ENCODE measurements at regions of chr5 and their contacts with region 1.

Region 1: DNA sequence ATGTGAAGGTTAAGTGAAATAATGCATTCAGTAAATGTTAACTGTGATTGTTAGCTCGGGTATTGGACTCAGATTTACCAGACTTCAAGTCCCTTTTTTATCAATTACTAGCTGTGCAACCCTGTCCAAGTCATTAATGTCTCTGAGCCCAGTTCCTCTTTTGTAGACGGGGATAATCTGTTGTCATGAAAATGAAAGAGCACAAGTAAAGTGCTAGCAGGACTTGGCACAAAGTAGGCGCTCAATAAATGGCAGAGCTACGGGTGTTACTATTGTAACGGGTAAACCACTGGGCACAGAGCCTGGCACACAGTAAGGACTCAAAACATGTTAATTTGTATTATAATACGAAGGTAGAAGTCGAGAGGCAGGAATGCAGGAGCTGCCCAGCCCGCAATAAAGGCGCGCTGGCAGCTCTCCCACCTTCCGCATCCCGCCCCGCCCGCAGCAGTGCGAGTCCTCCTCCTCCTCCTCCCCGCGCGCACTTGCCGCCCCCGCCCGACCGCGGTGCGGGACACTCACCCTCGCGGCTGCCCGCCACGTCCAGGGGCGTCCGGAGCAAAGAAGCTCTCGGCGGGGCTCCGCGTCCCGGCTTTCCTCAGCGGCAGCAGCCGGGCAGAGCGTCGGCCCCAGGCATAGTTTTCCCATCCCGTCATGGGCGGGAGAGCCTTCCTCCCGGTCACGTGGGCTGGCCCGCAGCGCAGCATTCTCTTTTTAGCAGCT is at the start of gene C1QTNF2:
- DNase-seq: peak; percentile 64
- ATAC-seq: peak; percentile 86
- H3K4me3 Mint-ChIP-seq: peak within 1 kb of the TSS; percentile 68
- H3K27ac Mint-ChIP-seq: no peak within 1 kb of the TSS
- H3K4me1 Mint-ChIP-seq: peaks cover 11% of the 10 kb centered on the region
- H3K27me3 Mint-ChIP-seq: peaks cover 54% of the 10 kb centered on the region
- CTCF ChIP-seq: no peak
- total RNA-seq, gene C1QTNF2: 0.25 to 0.52 TPM (median 0.44 TPM) in 3 replicates

Region 2: GRCh38 chr5:160359816-160360215 is 10.3 kb before region 1 on chr5:
- CTCF ChIA-PET with region 1: interaction called, 13 read pairs
- POLR2A ChIA-PET with region 1: no interaction called
- DNase-seq: no peak
- ATAC-seq: peak; percentile 63
- H3K4me3 Mint-ChIP-seq: no peak overlapping the region
- H3K27ac Mint-ChIP-seq: no peak overlapping the region
- H3K4me1 Mint-ChIP-seq: peaks cover 18% of the 10 kb centered on the region
- H3K27me3 Mint-ChIP-seq: no peaks in the 10 kb centered on the region; the same call in 1 of the 2 replicates
- CTCF ChIP-seq: no peak

Region 3: GRCh38 chr5:160458806-160459800 is 89.0 kb after region 1 on chr5:
- CTCF ChIA-PET with region 1: no interaction called
- POLR2A ChIA-PET with region 1: no interaction called
- DNase-seq: no peak
- ATAC-seq: no peak
- H3K4me3 Mint-ChIP-seq: no peak overlapping the region
- H3K27ac Mint-ChIP-seq: no peak overlapping the region
- H3K4me1 Mint-ChIP-seq: peaks cover 7% of the 10 kb centered on the region; the same call in 1 of the 2 replicates
- H3K27me3 Mint-ChIP-seq: no peaks in the 10 kb centered on the region
- CTCF ChIP-seq: no peak

Region 4: GRCh38 chr5:160565376-160565775 is 195.2 kb after region 1 on chr5:
- CTCF ChIA-PET with region 1: no interaction called
- POLR2A ChIA-PET with region 1: no interaction called
- DNase-seq: no peak
- ATAC-seq: 0 out of 2 replicates have a peak, but pooled peaks have one; percentile 22
- H3K4me3 Mint-ChIP-seq: no peak overlapping the region
- H3K27ac Mint-ChIP-seq: no peak overlapping the region
- H3K4me1 Mint-ChIP-seq: no peaks in the 10 kb centered on the region
- H3K27me3 Mint-ChIP-seq: no peaks in the 10 kb centered on the region
- CTCF ChIP-seq: no peak

Measured in WTC11 (cell line).